ENCODE measurements at regions of chr5 and their contacts with region 1.

Region 1: GRCh38 chr5:150357326-150358260 is at the start of gene TCOF1:
- DNase-seq: peak; percentile 98
- total RNA-seq, gene TCOF1: 15.5 TPM

Region 2: DNA sequence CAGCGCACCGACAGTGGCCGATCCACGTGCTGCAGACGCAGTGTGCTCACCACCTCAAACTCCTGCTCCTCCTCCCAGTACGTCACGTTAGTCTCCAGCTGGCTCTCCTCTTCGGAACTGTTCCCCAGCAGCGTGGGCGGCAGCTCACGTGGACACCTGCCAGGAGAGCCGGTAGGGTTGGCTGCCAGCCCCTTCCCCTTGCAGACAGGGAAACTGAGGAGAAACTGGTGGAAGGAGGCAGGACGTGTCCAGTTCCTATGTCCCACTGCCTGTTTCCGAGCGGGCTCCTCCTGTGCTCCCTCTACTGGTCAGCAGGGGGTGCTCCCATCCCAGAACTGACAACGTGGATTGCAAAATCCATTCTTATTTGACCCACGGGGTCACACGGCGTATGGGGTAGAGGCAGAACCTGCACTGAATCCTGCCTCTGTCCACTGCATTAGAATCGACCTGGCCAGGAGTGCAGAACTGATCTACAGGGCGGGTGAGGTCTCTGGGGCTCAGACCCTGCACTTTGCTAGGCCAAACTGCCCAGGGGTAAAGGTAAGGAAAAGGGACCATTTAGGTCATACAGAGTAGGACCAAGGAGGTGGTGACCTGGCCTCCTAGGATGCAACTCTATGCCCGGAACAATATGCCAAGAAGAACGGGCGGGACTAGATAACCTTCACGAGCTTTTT is 227.6 kb before region 1 on chr5:
- intact Hi-C with region 1: loop called (anchors 10 kb)
- DNase-seq: no peak

Region 3: GRCh38 chr5:150245111-150245789 is 112.3 kb before region 1 on chr5:
- intact Hi-C with region 1: loop called (anchors 10 kb)
- DNase-seq: peak; percentile 90

Region 4: GRCh38 chr5:150278916-150279315 is 78.7 kb before region 1 on chr5:
- intact Hi-C with region 1: no loop called
- DNase-seq: no peak

Region 5: DNA sequence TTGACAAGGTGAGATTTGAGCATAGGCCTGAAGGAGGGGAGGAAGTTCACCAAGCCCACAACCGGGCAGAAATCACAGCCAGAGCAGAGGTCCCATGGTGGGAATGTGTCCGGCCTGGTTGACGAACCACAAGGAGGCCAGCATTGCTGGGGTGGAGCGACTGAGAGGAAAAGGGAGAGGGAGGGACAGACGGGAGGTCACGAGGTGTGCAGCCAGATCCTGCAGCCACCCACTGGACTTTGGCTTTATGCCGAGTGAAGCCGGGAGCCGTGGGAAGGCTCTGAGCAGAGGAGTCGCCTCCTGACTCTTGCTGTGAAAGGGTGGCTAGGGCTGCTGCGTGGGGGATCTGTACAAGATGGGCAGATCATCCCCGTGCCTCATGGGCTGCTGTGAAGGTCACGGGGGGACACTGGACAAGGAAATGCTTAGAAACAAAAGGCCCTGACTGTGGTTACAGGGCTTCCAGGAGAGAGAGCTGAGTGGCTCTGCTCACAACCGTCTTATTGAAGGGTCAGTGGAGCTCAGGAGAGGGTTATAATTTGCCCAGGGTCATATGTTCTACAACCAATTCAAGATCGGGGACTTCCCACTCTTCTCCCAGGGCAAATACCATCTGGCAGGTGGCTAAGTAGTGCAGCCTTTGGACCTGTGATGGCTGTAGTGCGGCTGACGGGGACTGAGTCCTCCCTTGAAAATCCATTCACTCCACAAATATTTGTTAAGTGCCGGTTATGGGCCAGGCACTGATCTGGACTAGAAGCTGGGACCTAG is 70.7 kb after region 1 on chr5:
- intact Hi-C with region 1: no loop called
- DNase-seq: peak; percentile 80

Region 6: DNA sequence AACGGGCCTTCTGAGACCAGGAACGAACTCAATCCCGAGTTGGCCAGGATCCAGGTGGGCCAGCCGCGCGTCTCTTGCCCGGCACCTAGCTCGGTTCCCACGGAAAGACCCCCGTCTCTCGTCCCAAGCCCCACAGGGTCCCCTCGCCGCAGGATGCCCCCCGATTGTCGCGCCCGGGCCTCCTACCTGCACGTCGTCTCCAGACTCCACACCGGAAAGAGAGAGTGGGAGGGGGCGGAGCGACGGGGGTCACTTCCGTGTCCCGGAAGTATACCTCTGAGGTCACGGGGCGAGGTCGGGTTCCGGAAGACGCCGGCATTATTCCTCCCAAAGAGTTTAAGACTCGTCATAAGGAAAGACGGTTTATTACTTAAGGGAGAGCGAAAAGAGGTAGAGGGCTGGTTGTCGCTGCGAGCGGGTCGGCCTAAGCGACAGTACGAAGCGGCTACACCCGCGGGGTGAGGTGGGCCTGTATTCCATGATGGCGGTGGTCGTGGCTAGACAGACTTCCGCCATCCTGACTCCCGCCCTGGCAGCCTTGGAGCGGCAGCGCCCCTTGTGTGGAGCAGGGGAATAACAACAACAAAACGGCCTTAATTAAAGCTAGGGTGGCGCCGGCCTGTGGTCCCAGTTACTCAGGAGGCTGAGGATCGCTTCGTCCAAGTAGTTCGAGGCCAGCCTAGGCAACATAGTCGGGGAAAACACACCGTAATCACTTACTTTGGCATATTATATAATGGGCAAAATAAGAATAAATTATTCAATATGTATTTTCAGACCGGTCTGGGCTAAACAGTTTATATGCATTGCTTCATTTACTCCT is 92.1 kb after region 1 on chr5 and contains the start of gene RPS14:
- intact Hi-C with region 1: loop called (anchors 5 kb)
- DNase-seq: peak; percentile 96
- total RNA-seq, gene RPS14: 852 TPM